ENCODE measurements at regions of chr1 and their contacts with region 1.

Region 1: GRCh38 chr1:163174524-163175437 is 27.9 kb downstream of the RGS5 start:
- DNase-seq: peak; percentile 29 to 72 (median 62)
- ATAC-seq: peak; percentile 35
- H3K4me3 ChIP-seq: no peak overlapping the region
- H3K4me1 ChIP-seq: no peaks in the 10 kb centered on the region
- CTCF ChIP-seq: peak; percentile 56

Region 2: DNA sequence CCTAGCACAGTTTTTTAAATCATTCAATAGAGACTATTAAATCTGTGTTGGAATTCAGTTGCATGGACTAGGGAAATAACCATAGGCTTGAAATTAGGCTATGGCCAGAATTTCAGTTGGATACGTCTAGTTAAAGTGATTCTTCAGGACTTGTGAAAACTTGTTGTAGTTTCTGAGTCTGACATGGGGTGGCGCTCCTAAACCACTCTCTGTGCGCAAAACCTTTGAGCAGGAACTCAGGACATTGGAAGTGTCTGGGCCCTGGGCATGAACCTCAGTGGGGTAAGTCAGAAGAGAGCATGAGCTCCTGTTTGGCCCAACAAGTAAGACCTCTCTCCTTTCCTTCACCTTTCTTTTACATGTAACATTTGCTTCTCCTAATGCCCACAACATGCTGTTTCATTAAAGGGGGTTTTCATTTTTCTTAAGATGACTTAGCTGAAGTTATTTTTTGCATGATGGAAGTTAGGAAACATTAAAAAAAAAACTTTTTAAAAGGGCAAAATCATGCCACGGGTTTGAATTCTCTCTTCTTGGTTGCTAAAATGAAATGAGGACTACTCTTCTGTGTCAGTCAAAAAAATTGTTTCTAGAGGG is 296.7 kb before region 1 on chr1:
- intact Hi-C with region 1: loop called (anchors 10 kb)
- DNase-seq: peak in 2 of 3 donors; percentile 40 to 65
- ATAC-seq: peak; percentile 56
- H3K4me3 ChIP-seq: no peak overlapping the region
- H3K4me1 ChIP-seq: no peaks in the 10 kb centered on the region
- CTCF ChIP-seq: no peak

Region 3: DNA sequence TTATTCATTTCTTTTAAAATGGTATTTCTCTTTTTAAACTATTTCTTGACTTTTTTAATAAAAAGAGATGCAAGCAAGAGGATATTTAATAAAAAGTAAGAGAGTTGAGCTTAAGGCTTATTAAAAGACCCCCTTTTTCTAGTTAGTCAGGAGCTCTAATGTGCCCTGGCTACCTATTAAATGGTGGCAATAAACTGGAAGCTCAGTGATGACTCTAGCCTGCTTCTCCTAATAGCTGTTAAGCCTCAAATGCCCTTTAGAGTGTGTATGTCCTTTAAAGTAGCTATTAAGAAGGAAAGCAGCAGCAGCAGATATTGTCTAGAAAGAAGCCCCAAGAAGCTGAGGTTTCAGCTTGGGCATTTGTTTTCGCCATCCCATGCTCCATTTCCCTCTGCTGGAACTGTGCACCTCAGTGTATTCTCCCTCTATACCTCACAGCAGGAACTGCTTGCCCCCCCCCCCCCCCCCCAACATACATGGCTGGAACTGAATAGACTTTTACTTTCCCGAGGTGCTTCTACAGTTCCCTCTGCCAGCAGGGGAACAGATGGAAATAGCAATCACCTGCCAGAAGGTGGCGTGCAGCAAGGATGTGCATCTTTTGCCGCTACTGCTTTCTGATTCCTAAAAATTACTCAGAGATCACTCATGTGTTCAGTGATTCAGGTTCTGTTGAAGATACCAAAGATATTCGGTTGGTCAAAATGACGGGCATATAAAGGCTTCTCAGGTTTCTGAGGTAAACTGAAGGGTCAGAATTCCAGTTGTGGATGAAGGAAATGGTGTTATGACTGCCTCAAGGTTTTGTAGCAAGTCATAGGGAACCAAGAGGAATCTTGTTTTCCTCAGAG is 103.2 kb before region 1 on chr1:
- intact Hi-C with region 1: loop called in 1 of 2 experiments (anchors 10 kb)
- DNase-seq: peak in 2 of 3 donors; percentile 33 to 60
- ATAC-seq: peak; percentile 43
- H3K4me3 ChIP-seq: no peak overlapping the region
- H3K4me1 ChIP-seq: no peaks in the 10 kb centered on the region
- CTCF ChIP-seq: peak; percentile 20

Region 4: GRCh38 chr1:163213626-163214025 is 38.8 kb after region 1 on chr1:
- intact Hi-C with region 1: no loop called
- DNase-seq: no peak
- ATAC-seq: no peak
- H3K4me3 ChIP-seq: no peak overlapping the region
- H3K4me1 ChIP-seq: no peaks in the 10 kb centered on the region
- CTCF ChIP-seq: no peak

Measured in mucosa of descending colon (tissue), 3 donors.